H1 (cell line): ENCODE measurements at regions of chr10 and their contacts with region 1.

Region 1: DNA sequence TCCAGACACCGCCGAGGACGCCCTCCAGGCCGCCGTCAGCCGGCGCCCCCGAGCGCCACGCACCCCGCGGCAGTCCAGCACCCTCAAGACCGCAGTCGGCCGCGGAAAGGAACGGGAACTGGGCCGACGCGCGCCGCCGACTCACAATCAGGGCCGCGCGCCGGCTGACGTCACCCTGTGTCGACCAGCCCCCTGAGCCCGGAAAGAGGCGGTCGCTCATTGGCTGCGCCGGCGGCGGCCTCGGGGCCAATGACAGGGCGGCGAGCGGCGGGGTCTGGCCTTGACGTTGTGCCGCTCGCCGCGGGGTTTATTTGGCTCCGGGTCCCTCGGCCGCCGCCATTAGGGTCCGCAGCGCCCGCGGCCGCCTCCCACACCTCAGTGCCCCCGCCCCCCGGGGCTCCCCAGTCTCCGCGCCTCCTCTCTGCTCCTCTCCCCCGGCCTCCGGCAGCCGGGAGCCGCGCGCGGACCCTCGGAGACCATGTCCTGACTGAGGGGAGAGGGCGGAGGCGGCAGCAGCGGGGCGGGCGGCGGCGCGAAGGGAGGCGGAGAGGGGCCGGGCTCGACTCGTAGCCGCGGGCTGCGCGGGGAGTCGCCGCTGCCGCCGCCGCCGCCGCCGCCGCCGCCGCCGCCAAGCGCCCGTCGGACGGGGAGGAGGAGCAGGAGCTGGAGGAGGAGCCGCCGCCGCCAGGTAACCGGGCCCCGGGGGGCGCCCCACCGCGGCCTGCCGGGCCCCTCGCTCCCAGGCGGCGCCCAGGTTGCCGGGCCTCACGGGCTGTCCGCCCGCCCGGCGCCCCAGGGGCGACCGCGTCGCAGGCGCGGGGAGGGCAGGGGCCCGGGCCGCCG is 25.1 kb upstream of the ZRANB1 start:
- DNase-seq: peak; percentile 84 to 98
- H3K4me3 ChIP-seq: peak overlapping the region; percentile 98 to 100 (median 98)
- H3K27ac ChIP-seq: peak overlapping the region; percentile 91
- H3K4me1 ChIP-seq: no peaks in the 10 kb centered on the region
- H3K27me3 ChIP-seq: no peaks in the 10 kb centered on the region
- CTCF ChIP-seq: no peak
- EP300 ChIP-seq: peak in 1 of 2 experiments; percentile 33; a peak in 1 of 3 replicates
- POLR2A ChIP-seq: peak; percentile 87 to 94
- RAD21 ChIP-seq: no peak

Region 2: GRCh38 chr10:124902462-124902861 is 14.3 kb before region 1 on chr10:
- CTCF ChIA-PET with region 1: interaction called, 5 read pairs
- POLR2A ChIA-PET with region 1: interaction called, 15 read pairs
- DNase-seq: no peak
- H3K4me3 ChIP-seq: no peak overlapping the region
- H3K27ac ChIP-seq: no peak overlapping the region
- H3K4me1 ChIP-seq: 0 out of 7 replicates have a peak, but pooled peaks cover 0 to 2% (median 0%) of the 10 kb centered on the region in 4 experiments
- H3K27me3 ChIP-seq: no peaks in the 10 kb centered on the region
- CTCF ChIP-seq: no peak
- EP300 ChIP-seq: no peak
- POLR2A ChIP-seq: no peak
- RAD21 ChIP-seq: no peak

Region 3: GRCh38 chr10:124957409-124957947 is 40.7 kb after region 1 on chr10:
- CTCF ChIA-PET with region 1: no interaction called
- POLR2A ChIA-PET with region 1: interaction called, 10 read pairs
- DNase-seq: no peak
- H3K4me3 ChIP-seq: no peak overlapping the region
- H3K27ac ChIP-seq: no peak overlapping the region
- H3K4me1 ChIP-seq: no peaks in the 10 kb centered on the region
- H3K27me3 ChIP-seq: no peaks in the 10 kb centered on the region
- CTCF ChIP-seq: no peak
- EP300 ChIP-seq: no peak
- POLR2A ChIP-seq: no peak
- RAD21 ChIP-seq: no peak